Activated CD4-positive, alpha-beta memory T cell treated with anti-CD3 and anti-CD28 coated beads for 36 hours (primary cell): ENCODE measurements at regions of chr22 and their contacts with region 1.

Region 1: GRCh38 chr22:29245637-29246385 is 22.0 kb downstream of the RHBDD3 start:
- DNase-seq: peak; percentile 76
- H3K4me3 Mint-ChIP-seq: no peak overlapping the region
- H3K27ac Mint-ChIP-seq: no peak overlapping the region
- H3K4me1 Mint-ChIP-seq: no peaks in the 10 kb centered on the region
- H3K27me3 Mint-ChIP-seq: peaks cover 9% of the 10 kb centered on the region

Region 2: DNA sequence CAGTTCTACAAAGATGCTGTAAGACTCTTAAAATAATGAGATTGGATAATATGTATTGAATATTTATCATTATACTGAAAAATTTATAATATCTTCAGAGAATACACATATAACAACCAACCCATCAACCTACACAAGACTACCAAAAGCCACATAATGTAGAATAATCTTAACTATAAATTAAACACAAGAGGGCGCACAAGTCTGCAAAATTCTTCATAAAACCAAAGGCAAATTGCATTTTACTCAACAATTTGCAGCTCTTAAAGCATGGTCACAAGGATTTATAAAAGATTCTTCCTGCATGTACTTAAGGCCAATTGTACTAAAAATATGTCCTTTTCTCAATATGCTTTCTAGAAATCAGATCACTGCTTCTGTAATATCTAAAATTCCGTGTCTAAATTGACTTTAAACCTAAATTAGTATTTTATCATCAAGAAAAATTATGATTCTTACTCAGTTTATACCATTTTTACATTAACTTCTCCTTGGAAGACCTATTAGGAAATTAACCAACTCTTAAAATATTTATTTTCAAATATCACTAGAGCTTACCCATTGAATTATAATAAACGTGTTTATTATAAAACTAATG is 645.2 kb before region 1 on chr22:
- CTCF ChIA-PET with region 1: interaction called, 13 read pairs
- POLR2A ChIA-PET with region 1: no interaction called
- intact Hi-C with region 1: loop called (anchors 10 kb)
- DNase-seq: no peak
- H3K4me3 Mint-ChIP-seq: no peak overlapping the region
- H3K27ac Mint-ChIP-seq: no peak overlapping the region
- H3K4me1 Mint-ChIP-seq: no peaks in the 10 kb centered on the region
- H3K27me3 Mint-ChIP-seq: peaks cover 10% of the 10 kb centered on the region

Region 3: DNA sequence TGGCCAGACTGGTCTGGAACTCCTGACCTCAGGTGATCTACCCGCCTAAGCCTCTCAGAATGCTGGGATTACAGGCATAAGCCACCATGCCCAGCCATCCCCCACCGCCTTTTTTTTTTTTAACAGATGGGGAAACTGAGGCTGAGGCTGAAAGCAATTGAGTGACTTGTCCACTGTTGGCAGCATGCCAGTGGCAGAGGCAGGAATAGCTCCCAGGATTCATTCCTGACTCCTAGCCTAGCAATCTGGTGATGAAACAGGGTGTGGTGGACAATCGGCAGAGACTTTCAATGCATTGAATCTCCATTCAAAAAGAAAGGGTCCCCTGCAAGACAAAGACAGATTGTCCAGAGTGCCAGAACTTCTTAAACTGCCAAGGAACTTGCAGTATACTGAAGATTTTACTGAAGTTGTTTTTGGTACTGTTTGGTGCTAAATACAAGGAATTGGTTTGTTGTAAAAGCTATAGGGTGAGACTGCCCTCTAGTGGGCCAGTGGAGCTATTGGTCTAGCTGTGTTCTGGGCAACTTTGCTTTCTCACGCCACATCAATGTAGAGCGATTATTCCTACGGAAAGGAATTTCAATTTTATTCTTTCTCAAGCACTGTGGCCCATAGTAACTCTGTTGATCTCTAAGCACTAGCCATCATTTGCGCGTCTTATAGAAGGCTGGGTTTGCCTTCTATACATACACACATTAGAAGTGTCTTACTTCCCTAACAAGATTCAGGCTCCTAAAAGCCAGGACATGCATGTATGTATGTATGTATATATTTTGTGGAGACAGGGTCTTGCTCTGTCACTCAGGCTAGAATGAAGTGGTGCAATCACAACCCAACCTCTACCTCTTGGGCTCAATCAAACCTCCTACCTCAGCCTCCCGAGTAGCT is 205.2 kb before region 1 on chr22:
- CTCF ChIA-PET with region 1: interaction called, 22 read pairs
- POLR2A ChIA-PET with region 1: no interaction called
- intact Hi-C with region 1: no loop called
- DNase-seq: peak; percentile 65
- H3K4me3 Mint-ChIP-seq: no peak overlapping the region
- H3K27ac Mint-ChIP-seq: no peak overlapping the region
- H3K4me1 Mint-ChIP-seq: no peaks in the 10 kb centered on the region
- H3K27me3 Mint-ChIP-seq: peaks cover 1% of the 10 kb centered on the region

Region 4: DNA sequence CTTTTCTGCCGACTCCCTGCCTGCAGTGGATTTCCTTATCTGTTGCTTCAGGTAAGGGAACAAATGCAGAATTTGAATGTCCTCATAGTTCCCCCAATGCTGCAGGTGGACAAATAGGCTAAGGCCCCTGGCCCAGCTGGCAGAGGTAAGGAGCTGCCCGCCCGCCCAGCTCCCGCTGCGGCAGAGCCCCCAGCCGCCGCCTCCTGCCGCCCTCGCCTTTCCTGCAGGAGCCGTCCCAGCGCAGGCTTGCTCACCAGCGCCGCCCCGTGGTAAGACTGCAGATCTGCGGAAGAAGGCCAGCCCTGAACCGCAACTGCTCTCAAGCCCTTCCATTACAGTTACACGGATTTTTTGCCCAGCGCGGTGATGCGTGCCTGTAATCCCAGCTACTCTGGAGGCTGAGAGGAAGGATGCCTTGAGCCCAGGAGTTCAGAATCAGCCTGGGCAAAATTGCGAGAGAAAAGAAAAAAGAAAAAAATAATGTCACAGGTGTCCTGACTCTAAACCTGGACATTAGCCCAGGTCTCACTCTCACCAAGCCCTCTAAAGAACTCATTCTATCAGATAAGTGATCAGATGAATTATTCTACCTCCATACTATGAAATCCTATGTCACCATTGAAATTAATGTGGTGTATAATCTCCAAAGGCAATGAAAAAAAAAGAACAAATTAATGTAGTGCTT is 91.3 kb before region 1 on chr22:
- CTCF ChIA-PET with region 1: interaction called, 23 read pairs
- POLR2A ChIA-PET with region 1: no interaction called
- intact Hi-C with region 1: loop called (anchors 1 kb)
- DNase-seq: peak; percentile 83
- H3K4me3 Mint-ChIP-seq: no peak overlapping the region
- H3K27ac Mint-ChIP-seq: no peak overlapping the region
- H3K4me1 Mint-ChIP-seq: peaks cover 5% of the 10 kb centered on the region
- H3K27me3 Mint-ChIP-seq: peaks cover 25% of the 10 kb centered on the region

Region 5: DNA sequence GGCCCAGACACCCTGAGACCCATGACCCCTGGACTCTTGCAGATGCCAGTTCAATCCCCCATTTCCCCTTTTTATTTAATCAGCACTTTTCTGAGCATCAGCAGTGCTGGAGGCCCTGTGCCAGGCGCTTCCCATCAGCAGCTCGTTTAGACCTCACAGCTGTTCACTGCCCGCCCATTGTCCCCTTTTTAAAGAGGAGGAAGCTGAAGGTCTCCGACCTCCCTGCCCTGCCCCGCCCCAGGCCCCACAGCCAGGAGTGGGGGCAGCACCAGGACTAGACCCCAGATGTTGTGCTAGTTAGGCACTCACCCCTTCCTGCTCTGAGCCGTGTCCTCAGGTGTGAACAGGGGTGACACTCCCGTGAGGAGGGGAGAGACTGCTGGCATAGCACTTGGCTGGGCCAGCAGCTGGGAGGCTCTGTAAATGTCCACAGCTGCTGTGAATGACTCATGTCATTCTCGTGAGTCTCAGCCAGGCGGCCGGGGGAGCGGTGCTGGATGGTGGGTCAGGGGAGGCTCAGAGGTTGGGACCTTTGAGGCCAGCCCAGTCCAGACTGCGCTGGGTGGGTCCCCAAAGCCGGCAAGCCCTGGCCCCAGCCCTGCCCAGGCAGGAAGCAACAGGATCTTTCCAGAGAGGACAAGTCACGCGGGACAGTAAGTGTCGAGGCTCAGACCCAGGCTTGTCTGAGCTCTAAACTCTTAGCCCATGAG is 20.2 kb before region 1 on chr22:
- CTCF ChIA-PET with region 1: interaction called, 12 read pairs
- POLR2A ChIA-PET with region 1: no interaction called
- intact Hi-C with region 1: no loop called
- DNase-seq: no peak
- H3K4me3 Mint-ChIP-seq: no peak overlapping the region
- H3K27ac Mint-ChIP-seq: no peak overlapping the region
- H3K4me1 Mint-ChIP-seq: no peaks in the 10 kb centered on the region
- H3K27me3 Mint-ChIP-seq: no peaks in the 10 kb centered on the region

Region 6: DNA sequence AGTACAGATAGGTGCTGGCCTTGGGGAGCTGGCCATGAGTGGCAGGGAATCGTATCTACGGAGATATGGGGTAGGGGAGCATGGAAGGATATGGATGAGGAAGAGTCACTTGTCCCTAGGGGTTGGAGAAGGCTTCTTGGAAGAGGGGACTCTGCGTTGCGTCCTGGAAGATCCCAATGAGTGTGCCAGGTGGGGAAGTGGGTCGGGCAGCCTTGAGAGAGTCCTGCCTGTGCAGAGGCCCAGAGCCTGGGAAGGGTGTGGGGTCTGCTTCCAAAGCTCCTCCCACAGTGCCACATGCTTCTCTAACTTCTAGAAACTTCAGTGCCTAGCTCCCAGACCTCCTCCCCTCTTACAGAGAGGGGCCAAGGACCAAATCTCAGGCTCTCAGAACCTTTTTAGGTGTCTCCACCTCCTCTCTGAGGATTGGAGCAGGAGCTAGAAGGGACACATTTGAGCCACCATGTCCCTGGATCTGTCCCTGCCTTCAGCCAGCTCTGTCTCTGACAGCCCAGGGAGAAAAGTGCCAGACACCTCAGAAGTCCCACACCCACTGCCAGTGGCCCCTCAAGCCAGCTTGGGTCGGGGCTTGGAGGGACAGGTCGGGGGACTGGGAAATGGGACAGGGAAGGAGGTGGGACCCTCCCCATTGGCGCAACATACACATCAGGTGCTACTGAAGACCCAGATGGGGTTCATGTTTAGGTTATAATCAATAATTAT is 11.0 kb after region 1 on chr22:
- CTCF ChIA-PET with region 1: interaction called, 11 read pairs
- POLR2A ChIA-PET with region 1: no interaction called
- intact Hi-C with region 1: no loop called
- DNase-seq: no peak
- H3K4me3 Mint-ChIP-seq: no peak overlapping the region
- H3K27ac Mint-ChIP-seq: no peak overlapping the region
- H3K4me1 Mint-ChIP-seq: peaks cover 2% of the 10 kb centered on the region
- H3K27me3 Mint-ChIP-seq: peaks cover 2% of the 10 kb centered on the region